ENCODE measurements at regions of chr4 and their contacts with region 1.

Region 1: DNA sequence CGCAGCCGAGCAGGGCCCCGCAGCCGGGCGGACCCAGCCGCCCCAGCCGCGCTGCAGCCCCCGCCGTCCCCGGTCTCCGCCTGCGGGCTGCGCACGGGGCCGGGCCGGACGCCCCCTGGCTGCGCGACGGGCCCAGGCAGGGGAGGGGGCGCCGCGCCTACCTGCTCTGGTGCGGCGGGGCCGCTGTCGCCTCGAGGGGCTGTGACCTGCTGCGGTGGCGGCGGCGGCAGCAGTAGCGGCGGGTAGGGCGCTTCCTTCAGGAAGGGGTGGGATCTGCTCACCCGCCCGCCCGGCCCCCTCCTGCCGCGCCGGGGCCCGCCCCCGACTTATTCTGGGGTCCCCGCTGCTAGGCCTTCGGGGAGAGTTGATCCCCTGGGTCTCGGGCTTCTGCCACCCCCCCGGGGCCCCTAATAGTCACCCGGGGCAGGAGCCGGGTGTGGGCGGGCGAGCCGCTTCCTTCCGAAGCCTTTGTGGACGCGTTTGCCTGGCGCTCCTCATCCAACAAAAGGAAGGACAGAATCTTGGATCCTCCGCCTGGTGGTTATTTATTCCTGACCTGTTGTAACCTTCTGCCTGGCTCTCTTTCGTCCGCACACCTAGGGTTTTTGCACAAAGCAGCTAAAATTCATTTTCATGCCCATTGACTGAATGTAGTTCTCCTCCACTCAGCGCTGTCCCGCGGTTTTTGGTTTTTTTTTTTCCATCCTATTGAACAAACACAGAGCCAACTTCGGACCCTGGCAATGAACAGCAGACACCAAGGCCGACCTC is at the start of gene TMEM150C:
- DNase-seq: peak in 5 of 10 donors; percentile 26 to 59 (median 37)
- H3K4me3 ChIP-seq: peak within 1 kb of the TSS; percentile 54 to 84 (median 76)
- H3K27ac ChIP-seq: peak within 1 kb of the TSS in 33 of 59 donors; percentile 1 to 75 (median 48)
- H3K27me3 ChIP-seq: no peaks in the 10 kb centered on the region
- CTCF ChIP-seq: peak in 49 of 56 donors; percentile 8 to 64 (median 33)
- total RNA-seq, gene TMEM150C: 15.7 to 49.1 (median 28.1) TPM

Region 2: GRCh38 chr4:82469791-82470345 is 92.1 kb before region 1 on chr4:
- intact Hi-C with region 1: loop called in 1 of 2 experiments (anchors 5 kb)
- DNase-seq: peak in 2 of 10 donors; percentile 29 to 39
- H3K4me3 ChIP-seq: peak overlapping the region in 1 of 59 donors; percentile 19
- H3K27ac ChIP-seq: peak overlapping the region in 24 of 59 donors; percentile 3 to 67 (median 46)
- H3K27me3 ChIP-seq: no peaks in the 10 kb centered on the region
- CTCF ChIP-seq: peak in 42 of 56 donors; percentile 12 to 62 (median 38)

Region 3: DNA sequence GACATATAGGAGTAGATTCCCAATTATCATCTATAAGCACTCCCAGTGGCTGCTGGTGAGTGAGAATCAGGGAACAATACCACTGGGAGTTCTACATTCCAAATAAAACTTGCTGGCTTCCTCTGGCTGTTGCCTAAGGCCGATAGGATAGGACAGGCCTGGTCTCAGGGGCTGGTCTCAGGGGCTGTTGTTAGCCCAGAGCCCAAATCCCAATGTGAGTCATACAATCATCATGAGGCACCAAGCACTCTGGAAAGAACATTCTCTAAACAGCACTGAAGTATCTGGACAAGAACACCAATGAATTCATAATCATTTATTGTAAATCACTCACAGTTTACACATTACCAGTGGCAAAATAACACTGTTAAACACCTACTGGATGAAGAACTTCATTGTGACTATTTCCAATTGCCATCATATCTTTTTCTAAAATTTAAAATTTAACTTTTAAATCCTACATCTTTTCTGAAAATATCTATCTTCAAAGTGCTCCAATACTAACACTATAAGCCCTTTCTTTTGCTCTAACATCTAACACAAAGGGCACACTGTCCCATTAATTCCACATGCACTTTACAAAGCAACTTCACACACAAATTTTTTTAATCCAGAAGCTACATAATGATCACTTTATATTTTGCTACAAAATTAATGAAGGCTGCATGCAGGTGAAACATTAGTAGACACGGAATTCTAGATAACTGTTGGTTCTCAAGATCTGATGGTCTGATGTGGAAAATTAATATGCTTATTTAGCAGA is 67.5 kb after region 1 on chr4:
- intact Hi-C with region 1: loop called in 1 of 2 experiments (anchors 5 kb)
- DNase-seq: no peak
- H3K4me3 ChIP-seq: peak overlapping the region in 2 of 59 donors; percentile 8 to 23
- H3K27ac ChIP-seq: peak overlapping the region; percentile 68 to 99 (median 94)
- H3K27me3 ChIP-seq: no peaks in the 10 kb centered on the region
- CTCF ChIP-seq: peak in 1 of 56 donors; percentile 16

Region 4: GRCh38 chr4:82715725-82716617 is 154.0 kb after region 1 on chr4:
- intact Hi-C with region 1: loop called in 1 of 2 experiments (anchors 5 kb)
- DNase-seq: no peak
- H3K4me3 ChIP-seq: no peak overlapping the region
- H3K27ac ChIP-seq: peak overlapping the region in 42 of 59 donors; percentile 1 to 84 (median 54)
- H3K27me3 ChIP-seq: no peaks in the 10 kb centered on the region
- CTCF ChIP-seq: no peak

Region 5: GRCh38 chr4:82739316-82740179 is 177.6 kb after region 1 on chr4:
- intact Hi-C with region 1: loop called in 1 of 2 experiments (anchors 5 kb)
- DNase-seq: peak in 9 of 10 donors; percentile 50 to 81 (median 75)
- H3K4me3 ChIP-seq: peak overlapping the region in 1 of 59 donors; percentile 2
- H3K27ac ChIP-seq: peak overlapping the region in 56 of 59 donors; percentile 9 to 94 (median 75)
- H3K27me3 ChIP-seq: no peaks in the 10 kb centered on the region
- CTCF ChIP-seq: peak; percentile 40 to 100 (median 94)

Region 6: GRCh38 chr4:82745173-82745842 is 183.4 kb after region 1 on chr4:
- intact Hi-C with region 1: loop called in 1 of 2 experiments (anchors 5 kb)
- DNase-seq: no peak
- H3K4me3 ChIP-seq: no peak overlapping the region
- H3K27ac ChIP-seq: peak overlapping the region in 56 of 59 donors; percentile 2 to 95 (median 75)
- H3K27me3 ChIP-seq: no peaks in the 10 kb centered on the region
- CTCF ChIP-seq: no peak

Measured in dorsolateral prefrontal cortex (tissue), 120 donors.